ENCODE measurements at regions of chr15 and their contacts with region 1.

Region 1: DNA sequence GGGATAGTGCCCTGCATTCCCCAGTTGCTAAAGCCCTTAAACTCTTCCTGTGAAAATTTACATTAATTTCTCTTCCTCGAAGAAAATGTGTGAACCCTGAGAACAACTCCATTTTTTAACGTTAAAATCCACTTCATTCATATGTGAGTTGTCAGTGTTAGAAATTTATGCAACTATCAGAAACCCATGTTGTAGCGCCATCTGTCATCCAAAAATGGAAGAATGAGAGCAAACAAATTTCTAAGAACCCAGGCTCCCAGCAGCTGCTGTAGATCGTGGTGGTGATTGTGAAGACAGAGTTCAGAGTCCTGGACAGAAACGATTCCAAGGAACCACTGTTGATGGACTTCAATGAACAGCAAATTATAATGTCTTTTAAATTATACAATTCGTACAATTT is 179.7 kb upstream of the NDN start:
- DNase-seq: no peak
- H3K4me3 ChIP-seq: no peak overlapping the region
- H3K27ac ChIP-seq: no peak overlapping the region
- H3K4me1 ChIP-seq: no peaks in the 10 kb centered on the region
- H3K27me3 ChIP-seq: peaks cover 0 to 5% of the 10 kb centered on the region in 2 donors
- CTCF ChIP-seq: no peak

Region 2: DNA sequence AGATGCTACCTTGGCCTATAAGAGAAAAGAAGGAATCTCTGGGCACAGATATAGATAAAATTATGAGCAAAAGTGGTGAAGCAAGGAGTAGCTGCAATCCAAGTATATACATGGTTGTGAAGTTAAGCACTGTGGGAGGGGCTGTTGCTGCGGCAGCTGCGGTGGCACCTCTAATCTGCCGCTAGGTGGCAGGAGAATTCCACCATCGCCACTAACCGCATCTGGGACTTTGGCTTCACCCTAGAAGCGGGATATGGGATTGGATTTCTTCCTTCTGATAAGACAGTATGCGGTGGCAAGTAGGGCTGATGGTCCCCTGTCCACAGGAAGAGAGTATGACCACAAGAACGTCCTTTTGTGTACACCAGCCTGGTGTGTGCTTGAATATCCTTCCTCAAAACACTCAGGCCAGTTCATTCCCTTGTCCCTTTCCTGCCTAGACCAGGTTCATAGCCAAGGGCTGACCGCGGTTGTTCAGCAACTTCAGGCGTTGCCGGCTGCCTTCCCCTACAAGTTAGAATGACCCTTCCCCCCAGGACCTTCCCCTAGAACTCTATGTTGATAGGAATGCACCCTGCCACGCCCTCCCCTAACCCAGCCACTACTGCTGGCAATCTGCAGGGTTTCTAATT is 224.3 kb before region 1 on chr15:
- intact Hi-C with region 1: loop called (anchors 10 kb)
- DNase-seq: no peak
- H3K4me3 ChIP-seq: no peak overlapping the region
- H3K27ac ChIP-seq: no peak overlapping the region
- H3K4me1 ChIP-seq: peaks cover 0 to 3% (median 2%) of the 10 kb centered on the region in 4 donors
- H3K27me3 ChIP-seq: peaks cover 0 to 44% of the 10 kb centered on the region in 2 donors
- CTCF ChIP-seq: peak; percentile 53 to 72

Region 3: DNA sequence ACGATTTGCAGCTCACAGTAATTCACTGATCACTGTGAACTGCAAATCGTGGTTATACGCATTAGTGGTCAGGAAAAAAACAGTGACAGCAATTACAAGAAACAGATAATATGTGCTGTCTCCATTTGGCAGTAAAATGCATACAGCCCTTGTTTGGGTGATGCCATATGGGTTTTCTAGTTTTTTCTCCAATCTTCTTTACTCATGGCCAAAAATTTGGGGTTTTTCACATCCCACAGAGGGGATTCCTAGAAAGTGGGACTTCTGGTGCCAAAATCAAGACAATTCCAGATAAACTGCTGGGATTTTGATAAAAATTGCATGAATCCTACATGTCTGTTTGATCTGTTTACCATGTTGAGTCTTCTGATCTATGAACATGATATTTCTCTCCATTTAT is 195.4 kb before region 1 on chr15:
- intact Hi-C with region 1: no loop called
- DNase-seq: no peak
- H3K4me3 ChIP-seq: no peak overlapping the region
- H3K27ac ChIP-seq: no peak overlapping the region
- H3K4me1 ChIP-seq: no peaks in the 10 kb centered on the region
- H3K27me3 ChIP-seq: no peaks in the 10 kb centered on the region
- CTCF ChIP-seq: no peak

Measured in tibial artery (tissue), 4 donors.